B cell (primary cell): ENCODE measurements at regions of chr13 and their contacts with region 1.

Region 1: DNA sequence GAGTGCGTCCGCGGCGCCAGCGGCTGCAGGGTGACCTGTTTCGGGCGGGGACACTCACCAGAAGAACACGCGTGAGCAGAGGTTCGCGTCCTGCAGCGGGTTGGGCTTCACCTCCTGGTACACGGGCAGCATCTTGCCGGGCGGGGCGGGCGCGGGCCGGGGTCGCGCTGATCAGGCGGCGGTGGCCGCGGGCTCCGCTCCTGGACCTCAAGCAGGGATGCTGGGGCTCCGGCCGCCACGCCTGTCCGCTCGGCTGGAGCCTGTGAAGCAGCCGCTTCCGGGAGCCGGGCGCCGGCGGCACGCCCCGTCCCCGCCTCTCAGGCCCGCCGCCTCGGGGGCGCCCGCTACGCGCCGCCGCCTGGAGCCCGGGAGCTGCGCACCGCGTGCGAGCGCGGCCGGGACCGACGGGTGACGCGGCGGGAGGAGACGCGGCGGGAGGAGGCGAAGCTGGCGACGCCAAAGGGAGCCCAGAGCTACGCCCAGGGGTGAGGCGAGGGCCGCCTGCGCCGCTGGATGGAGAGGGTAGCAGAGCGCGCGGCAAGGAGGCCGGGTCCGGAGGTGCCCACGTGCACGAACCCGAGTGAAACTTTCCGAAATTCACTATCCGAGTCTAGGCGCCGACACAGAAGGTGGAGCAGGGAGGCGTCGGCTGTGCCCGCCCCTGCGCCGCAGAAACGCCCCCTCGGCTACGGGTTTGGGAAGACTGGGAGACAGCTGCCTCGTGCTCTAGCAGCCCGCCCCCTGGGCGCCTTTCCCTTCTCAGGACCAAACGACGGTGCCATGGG is at the start of gene ABCC4:
- DNase-seq: peak; percentile 69
- ATAC-seq: peak; percentile 75
- H3K4me3 ChIP-seq: peak within 1 kb of the TSS; percentile 2 to 80 (median 63)
- H3K4me3 Mint-ChIP-seq: peak within 1 kb of the TSS; percentile 85
- H3K27ac ChIP-seq: no peak within 1 kb of the TSS
- H3K27ac Mint-ChIP-seq: peak within 1 kb of the TSS; percentile 53
- H3K4me1 ChIP-seq: peaks cover 12 to 18% of the 10 kb centered on the region in 2 donors
- H3K4me1 Mint-ChIP-seq: peaks cover 22% of the 10 kb centered on the region
- H3K27me3 ChIP-seq: peaks cover 0 to 9% (median 0%) of the 10 kb centered on the region in 4 experiments
- H3K27me3 Mint-ChIP-seq: no peaks in the 10 kb centered on the region
- CTCF ChIP-seq: no peak
- total RNA-seq, gene ABCC4: 7.1 and 7.3 TPM in 2 replicates

Region 2: DNA sequence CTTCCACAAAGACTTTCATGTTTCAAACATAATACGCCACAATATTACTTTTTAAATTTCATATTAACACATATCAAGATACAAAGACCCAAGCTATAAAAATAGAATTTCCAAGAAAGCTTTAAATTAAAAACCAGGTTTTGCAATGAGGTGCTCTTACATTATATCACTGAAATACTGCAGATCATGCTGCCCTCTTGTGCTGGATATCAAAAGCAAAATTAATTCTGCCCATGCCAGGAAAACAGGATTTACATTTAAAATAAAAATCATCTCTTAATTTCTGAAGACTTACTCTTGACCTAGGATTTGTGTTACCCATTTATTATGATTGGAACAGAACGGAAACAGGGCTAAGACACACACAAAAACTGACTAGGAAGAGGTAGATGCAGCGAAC is 145.2 kb before region 1 on chr13:
- CTCF ChIA-PET with region 1: no interaction called
- POLR2A ChIA-PET with region 1: no interaction called
- intact Hi-C with region 1: no loop called
- DNase-seq: no peak
- ATAC-seq: no peak
- H3K4me3 ChIP-seq: no peak overlapping the region
- H3K4me3 Mint-ChIP-seq: no peak overlapping the region
- H3K27ac ChIP-seq: no peak overlapping the region
- H3K27ac Mint-ChIP-seq: no peak overlapping the region
- H3K4me1 ChIP-seq: no peaks in the 10 kb centered on the region
- H3K4me1 Mint-ChIP-seq: no peaks in the 10 kb centered on the region
- H3K27me3 ChIP-seq: no peaks in the 10 kb centered on the region
- H3K27me3 Mint-ChIP-seq: no peaks in the 10 kb centered on the region
- CTCF ChIP-seq: no peak

Region 3: GRCh38 chr13:95226932-95227695 is 74.3 kb before region 1 on chr13:
- CTCF ChIA-PET with region 1: interaction called, 3 read pairs
- POLR2A ChIA-PET with region 1: no interaction called
- intact Hi-C with region 1: loop called (anchors 5 kb)
- DNase-seq: peak; percentile 33
- ATAC-seq: peak; percentile 70
- H3K4me3 ChIP-seq: peak overlapping the region in 2 of 5 experiments; percentile 1 to 33
- H3K4me3 Mint-ChIP-seq: peak overlapping the region; percentile 70
- H3K27ac ChIP-seq: peak overlapping the region; percentile 23 to 37
- H3K27ac Mint-ChIP-seq: peak overlapping the region; percentile 57
- H3K4me1 ChIP-seq: peaks cover 12 to 22% of the 10 kb centered on the region in 2 donors
- H3K4me1 Mint-ChIP-seq: peaks cover 21% of the 10 kb centered on the region
- H3K27me3 ChIP-seq: no peaks in the 10 kb centered on the region
- H3K27me3 Mint-ChIP-seq: no peaks in the 10 kb centered on the region
- CTCF ChIP-seq: no peak

Region 4: GRCh38 chr13:95289020-95289444 is 12.3 kb before region 1 on chr13:
- CTCF ChIA-PET with region 1: interaction called, 13 read pairs
- POLR2A ChIA-PET with region 1: no interaction called
- intact Hi-C with region 1: no loop called
- DNase-seq: no peak
- ATAC-seq: no peak
- H3K4me3 ChIP-seq: no peak overlapping the region
- H3K4me3 Mint-ChIP-seq: no peak overlapping the region
- H3K27ac ChIP-seq: no peak overlapping the region
- H3K27ac Mint-ChIP-seq: no peak overlapping the region
- H3K4me1 ChIP-seq: peaks cover 5 to 6% of the 10 kb centered on the region in 2 donors
- H3K4me1 Mint-ChIP-seq: peaks cover 11% of the 10 kb centered on the region
- H3K27me3 ChIP-seq: no peaks in the 10 kb centered on the region
- H3K27me3 Mint-ChIP-seq: no peaks in the 10 kb centered on the region
- CTCF ChIP-seq: no peak

Region 5: GRCh38 chr13:95378603-95379002 is 77.2 kb after region 1 on chr13:
- CTCF ChIA-PET with region 1: interaction called, 33 read pairs
- POLR2A ChIA-PET with region 1: no interaction called
- intact Hi-C with region 1: loop called (anchors 2 kb)
- DNase-seq: no peak
- ATAC-seq: no peak
- H3K4me3 ChIP-seq: no peak overlapping the region
- H3K4me3 Mint-ChIP-seq: no peak overlapping the region
- H3K27ac ChIP-seq: no peak overlapping the region
- H3K27ac Mint-ChIP-seq: no peak overlapping the region
- H3K4me1 ChIP-seq: peaks cover 0 to 8% of the 10 kb centered on the region in 2 donors
- H3K4me1 Mint-ChIP-seq: peaks cover 8% of the 10 kb centered on the region
- H3K27me3 ChIP-seq: peaks cover 0 to 22% (median 6%) of the 10 kb centered on the region in 4 experiments
- H3K27me3 Mint-ChIP-seq: peaks cover 29% of the 10 kb centered on the region
- CTCF ChIP-seq: no peak

Region 6: GRCh38 chr13:95480131-95480545 is 178.8 kb after region 1 on chr13:
- CTCF ChIA-PET with region 1: interaction called, 4 read pairs
- POLR2A ChIA-PET with region 1: no interaction called
- intact Hi-C with region 1: loop called (anchors 10 kb)
- DNase-seq: no peak
- ATAC-seq: no peak
- H3K4me3 ChIP-seq: no peak overlapping the region
- H3K4me3 Mint-ChIP-seq: no peak overlapping the region
- H3K27ac ChIP-seq: no peak overlapping the region
- H3K27ac Mint-ChIP-seq: no peak overlapping the region
- H3K4me1 ChIP-seq: peaks cover 0 to 10% of the 10 kb centered on the region in 2 donors
- H3K4me1 Mint-ChIP-seq: peaks cover 10% of the 10 kb centered on the region
- H3K27me3 ChIP-seq: peaks cover 0 to 7% (median 0%) of the 10 kb centered on the region in 4 experiments
- H3K27me3 Mint-ChIP-seq: peaks cover 10% of the 10 kb centered on the region
- CTCF ChIP-seq: no peak

Region 7: GRCh38 chr13:95676762-95677563 is 375.6 kb after region 1 on chr13 and contains the start of gene DNAJC3:
- CTCF ChIA-PET with region 1: no interaction called
- POLR2A ChIA-PET with region 1: no interaction called
- intact Hi-C with region 1: loop called (anchors 5 kb)
- DNase-seq: peak; percentile 99
- ATAC-seq: peak; percentile 95
- H3K4me3 ChIP-seq: peak within 1 kb of the TSS; percentile 72 to 98 (median 89)
- H3K4me3 Mint-ChIP-seq: peak within 1 kb of the TSS; percentile 95
- H3K27ac ChIP-seq: peak within 1 kb of the TSS; percentile 79 to 91
- H3K27ac Mint-ChIP-seq: peak within 1 kb of the TSS; percentile 94
- H3K4me1 ChIP-seq: peaks cover 22 to 27% of the 10 kb centered on the region in 2 donors
- H3K4me1 Mint-ChIP-seq: peaks cover 48% of the 10 kb centered on the region
- H3K27me3 ChIP-seq: no peaks in the 10 kb centered on the region
- H3K27me3 Mint-ChIP-seq: no peaks in the 10 kb centered on the region
- CTCF ChIP-seq: no peak
- total RNA-seq, gene DNAJC3: 12.1 and 13.0 TPM in 2 replicates